Heart right ventricle (tissue), 16 donors: ENCODE measurements at regions of chr3 and their contacts with region 1.

Region 1: GRCh38 chr3:42547401-42547945 is 34.3 kb downstream of the SEC22C start:
- DNase-seq: peak; percentile 61 to 74
- ATAC-seq: peak; percentile 35 to 81 (median 61)
- H3K4me3 ChIP-seq: no peak overlapping the region
- H3K27ac ChIP-seq: peak overlapping the region in 4 of 10 donors; percentile 9 to 58 (median 30)
- H3K4me1 ChIP-seq: peaks cover 0 to 42% (median 13%) of the 10 kb centered on the region in 9 donors
- H3K27me3 ChIP-seq: no peaks in the 10 kb centered on the region
- CTCF ChIP-seq: peak; percentile 92 to 99 (median 97)

Region 2: GRCh38 chr3:42229942-42230688 is 317.4 kb before region 1 on chr3:
- intact Hi-C with region 1: loop called in 4 of 10 experiments (anchors 2 to 10 kb)
- DNase-seq: no peak
- ATAC-seq: peak in 2 of 8 donors; percentile 49 to 53
- H3K4me3 ChIP-seq: no peak overlapping the region
- H3K27ac ChIP-seq: no peak overlapping the region
- H3K4me1 ChIP-seq: peaks cover 0 to 11% (median 7%) of the 10 kb centered on the region in 9 donors
- H3K27me3 ChIP-seq: peaks cover 0 to 8% (median 0%) of the 10 kb centered on the region in 7 donors
- CTCF ChIP-seq: peak in 8 of 9 donors; percentile 30 to 66 (median 59)

Region 3: GRCh38 chr3:42247576-42248027 is 299.9 kb before region 1 on chr3:
- intact Hi-C with region 1: loop called in 4 of 10 experiments (anchors 5 kb)
- DNase-seq: peak in 1 of 2 donors; percentile 57
- ATAC-seq: peak in 6 of 8 donors; percentile 29 to 72 (median 50)
- H3K4me3 ChIP-seq: no peak overlapping the region
- H3K27ac ChIP-seq: no peak overlapping the region
- H3K4me1 ChIP-seq: peaks cover 0 to 7% (median 0%) of the 10 kb centered on the region in 9 donors
- H3K27me3 ChIP-seq: peaks cover 0 to 33% (median 15%) of the 10 kb centered on the region in 7 donors
- CTCF ChIP-seq: peak; percentile 44 to 86 (median 76)

Region 4: GRCh38 chr3:42502429-42503250 is 44.8 kb before region 1 on chr3 and contains the start of gene VIPR1:
- intact Hi-C with region 1: loop called in 3 of 10 experiments (anchors 5 kb)
- DNase-seq: peak; percentile 51 to 77
- ATAC-seq: peak; percentile 86 to 95 (median 90)
- H3K4me3 ChIP-seq: peak within 1 kb of the TSS in 9 of 10 donors; percentile 35 to 62 (median 52)
- H3K27ac ChIP-seq: peak within 1 kb of the TSS in 6 of 10 donors; percentile 10 to 53 (median 24)
- H3K4me1 ChIP-seq: peaks cover 8 to 30% (median 20%) of the 10 kb centered on the region in 9 donors
- H3K27me3 ChIP-seq: peaks cover 0 to 48% (median 38%) of the 10 kb centered on the region in 7 donors
- CTCF ChIP-seq: no peak
- total RNA-seq, gene VIPR1: 0.76 to 7.3 (median 1.5) TPM

Region 5: GRCh38 chr3:42871592-42872196 is 324.2 kb after region 1 on chr3:
- intact Hi-C with region 1: no loop called
- DNase-seq: peak; percentile 41 to 51
- ATAC-seq: peak in 7 of 8 donors; percentile 43 to 83 (median 64)
- H3K4me3 ChIP-seq: no peak overlapping the region
- H3K27ac ChIP-seq: peak overlapping the region in 5 of 10 donors; percentile 5 to 64 (median 47)
- H3K4me1 ChIP-seq: peaks cover 0 to 20% (median 11%) of the 10 kb centered on the region in 9 donors
- H3K27me3 ChIP-seq: no peaks in the 10 kb centered on the region
- CTCF ChIP-seq: no peak